HepG2 (cell line): ENCODE measurements at regions of chr17 and their contacts with region 1.

Region 1: DNA sequence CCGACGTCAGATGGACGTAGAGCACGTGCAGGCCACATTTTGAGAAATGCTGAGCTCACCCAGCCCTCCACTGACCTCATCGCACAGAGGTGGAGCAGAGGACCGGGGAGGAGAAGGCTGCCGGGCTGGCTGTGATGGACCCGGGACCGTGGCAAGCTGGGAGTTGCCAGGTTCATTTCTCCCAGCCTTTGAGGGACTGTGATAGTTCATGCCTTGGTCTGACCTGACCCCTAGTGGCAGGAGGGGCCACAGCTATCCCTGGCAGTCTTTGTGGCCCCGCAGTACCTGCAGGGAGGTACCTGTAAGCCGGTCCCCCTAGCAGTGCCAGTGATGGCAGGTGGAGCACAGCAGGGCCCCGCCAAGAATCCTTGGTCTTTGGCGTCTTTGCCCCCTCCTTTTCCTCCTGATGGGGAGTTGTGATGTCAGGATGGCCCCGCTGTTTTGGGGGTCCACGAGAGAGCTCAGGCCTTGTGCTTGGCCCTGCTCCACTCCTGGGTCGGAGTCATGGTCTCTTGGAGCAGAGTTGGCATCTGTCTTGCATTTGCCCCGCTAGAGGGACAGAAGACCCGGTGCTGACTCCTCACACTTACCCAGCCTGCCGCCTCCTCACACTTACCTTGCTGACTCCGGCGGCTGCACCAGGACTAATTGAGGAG is 50.4 kb downstream of the OR1D5 start:
- DNase-seq: peak; percentile 53
- ATAC-seq: peak; percentile 96
- H3K4me3 ChIP-seq: no peak overlapping the region
- H3K27ac ChIP-seq: no peak overlapping the region
- H3K4me1 ChIP-seq: no peaks in the 10 kb centered on the region
- H3K27me3 ChIP-seq: no peaks in the 10 kb centered on the region
- CTCF ChIP-seq: peak; percentile 90
- EP300 ChIP-seq: no peak
- POLR2A ChIP-seq: no peak
- RAD21 ChIP-seq: peak; percentile 92

Region 2: DNA sequence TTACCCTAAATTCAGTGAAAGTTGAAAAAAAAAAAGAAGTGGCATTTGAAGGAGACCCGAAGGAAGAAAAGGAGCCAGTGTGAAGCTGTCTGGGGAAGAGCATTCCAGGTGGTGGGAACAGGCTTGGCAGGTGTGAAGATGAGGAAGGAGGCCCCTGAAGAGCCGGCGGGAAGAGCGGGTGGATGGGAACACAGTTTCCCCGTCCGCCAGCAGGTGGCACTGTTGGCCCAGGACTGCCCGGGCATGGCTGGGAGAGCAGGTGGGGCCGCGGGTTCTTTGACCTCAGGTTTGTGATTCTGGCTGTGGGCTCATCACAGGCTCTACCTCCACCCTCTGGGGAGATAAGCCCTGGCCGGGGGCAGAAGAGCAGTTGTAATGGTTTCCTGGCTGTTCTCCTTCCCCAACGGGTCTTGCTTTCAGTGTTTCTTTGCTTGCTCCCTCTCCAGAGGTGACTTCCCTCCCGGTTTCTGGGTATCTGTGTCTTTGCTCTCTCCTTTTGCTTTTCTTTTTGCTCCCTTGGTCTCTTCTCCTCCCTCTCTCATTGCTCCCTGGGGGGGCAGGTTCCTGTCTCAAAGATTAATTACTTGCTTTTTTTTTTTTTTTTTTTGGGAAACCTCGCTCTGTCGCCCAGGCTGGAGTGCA is 184.5 kb before region 1 on chr17:
- CTCF ChIA-PET with region 1: interaction called, 14 read pairs
- POLR2A ChIA-PET with region 1: no interaction called
- in situ Hi-C with region 1: loop called (anchors 5 kb)
- intact Hi-C with region 1: loop called (anchors 1 kb)
- DNase-seq: peak; percentile 52
- ATAC-seq: peak; percentile 91
- H3K4me3 ChIP-seq: no peak overlapping the region
- H3K27ac ChIP-seq: no peak overlapping the region
- H3K4me1 ChIP-seq: peaks cover 18% of the 10 kb centered on the region
- H3K27me3 ChIP-seq: no peaks in the 10 kb centered on the region
- CTCF ChIP-seq: peak; percentile 94
- EP300 ChIP-seq: no peak
- POLR2A ChIP-seq: no peak
- RAD21 ChIP-seq: peak; percentile 91

Region 3: GRCh38 chr17:2847381-2848333 is 165.4 kb before region 1 on chr17:
- CTCF ChIA-PET with region 1: interaction called, 20 read pairs
- POLR2A ChIA-PET with region 1: no interaction called
- in situ Hi-C with region 1: loop called (anchors 10 kb)
- intact Hi-C with region 1: no loop called
- DNase-seq: no peak
- ATAC-seq: no peak
- H3K4me3 ChIP-seq: no peak overlapping the region
- H3K27ac ChIP-seq: no peak overlapping the region
- H3K4me1 ChIP-seq: 0 out of 2 replicates have a peak, but pooled peaks cover 7% of the 10 kb centered on the region
- H3K27me3 ChIP-seq: peaks cover 0 to 2% of the 10 kb centered on the region in 2 experiments; a peak in 1 of 5 replicates
- CTCF ChIP-seq: no peak
- EP300 ChIP-seq: no peak
- POLR2A ChIP-seq: no peak
- RAD21 ChIP-seq: no peak

Region 4: DNA sequence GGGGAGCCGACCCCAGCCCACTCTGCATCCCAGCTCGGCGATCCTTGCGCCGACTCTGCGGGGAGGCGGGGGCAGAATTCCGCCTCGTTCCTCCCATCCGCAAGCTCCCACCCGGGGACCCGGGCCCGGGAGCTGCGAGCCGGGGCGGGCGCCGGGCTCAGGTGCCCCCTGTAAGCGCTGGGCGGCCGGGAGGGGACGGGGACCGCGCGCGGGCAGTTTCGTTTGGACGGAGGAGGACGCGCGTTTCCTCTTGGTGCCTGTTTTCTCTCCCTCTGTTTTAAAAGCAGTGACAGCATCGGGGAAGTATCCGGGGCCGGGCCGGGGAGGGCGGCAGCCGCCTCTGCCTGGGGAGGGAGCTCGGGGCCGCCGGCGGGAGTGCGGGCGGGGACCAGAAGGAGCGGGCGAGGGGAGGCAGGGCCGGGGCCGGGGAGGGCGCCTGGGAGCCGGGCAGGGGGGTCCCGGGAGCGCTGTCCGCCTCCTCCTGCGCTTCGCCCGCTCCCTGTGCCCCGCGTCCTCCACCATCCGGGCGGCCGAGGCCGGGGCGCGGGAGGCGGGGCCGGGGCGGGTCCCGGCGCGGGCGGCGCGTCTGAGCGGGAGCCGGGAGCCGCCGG is 159.8 kb before region 1 on chr17:
- CTCF ChIA-PET with region 1: interaction called, 20 read pairs
- POLR2A ChIA-PET with region 1: no interaction called
- in situ Hi-C with region 1: loop called (anchors 10 kb)
- intact Hi-C with region 1: no loop called
- DNase-seq: no peak
- ATAC-seq: peak; percentile 18
- H3K4me3 ChIP-seq: peak overlapping the region; percentile 32 to 73 (median 61); a peak in 4 of 6 replicates
- H3K27ac ChIP-seq: no peak overlapping the region
- H3K4me1 ChIP-seq: peaks cover 28% of the 10 kb centered on the region
- H3K27me3 ChIP-seq: peaks cover 2 to 14% of the 10 kb centered on the region in 2 experiments; a peak in 4 of 5 replicates
- CTCF ChIP-seq: no peak
- EP300 ChIP-seq: no peak
- POLR2A ChIP-seq: no peak
- RAD21 ChIP-seq: no peak

Region 5: GRCh38 chr17:2929881-2930533 is 83.0 kb before region 1 on chr17:
- CTCF ChIA-PET with region 1: interaction called, 5 read pairs
- POLR2A ChIA-PET with region 1: no interaction called
- in situ Hi-C with region 1: loop called (anchors 5 kb)
- intact Hi-C with region 1: loop called (anchors 2 kb)
- DNase-seq: peak; percentile 29
- ATAC-seq: peak; percentile 93
- H3K4me3 ChIP-seq: no peak overlapping the region
- H3K27ac ChIP-seq: no peak overlapping the region
- H3K4me1 ChIP-seq: peaks cover 12% of the 10 kb centered on the region
- H3K27me3 ChIP-seq: no peaks in the 10 kb centered on the region
- CTCF ChIP-seq: peak; percentile 85
- EP300 ChIP-seq: no peak
- POLR2A ChIP-seq: no peak
- RAD21 ChIP-seq: peak; percentile 70

Region 6: GRCh38 chr17:2937331-2938003 is 75.6 kb before region 1 on chr17:
- CTCF ChIA-PET with region 1: no interaction called
- POLR2A ChIA-PET with region 1: no interaction called
- in situ Hi-C with region 1: loop called (anchors 5 kb)
- intact Hi-C with region 1: no loop called
- DNase-seq: no peak
- ATAC-seq: peak; percentile 35; the same call in 2 of the 3 replicates
- H3K4me3 ChIP-seq: no peak overlapping the region
- H3K27ac ChIP-seq: no peak overlapping the region
- H3K4me1 ChIP-seq: peaks cover 15% of the 10 kb centered on the region
- H3K27me3 ChIP-seq: no peaks in the 10 kb centered on the region
- CTCF ChIP-seq: peak; percentile 47
- EP300 ChIP-seq: no peak
- POLR2A ChIP-seq: no peak
- RAD21 ChIP-seq: no peak

Region 7: DNA sequence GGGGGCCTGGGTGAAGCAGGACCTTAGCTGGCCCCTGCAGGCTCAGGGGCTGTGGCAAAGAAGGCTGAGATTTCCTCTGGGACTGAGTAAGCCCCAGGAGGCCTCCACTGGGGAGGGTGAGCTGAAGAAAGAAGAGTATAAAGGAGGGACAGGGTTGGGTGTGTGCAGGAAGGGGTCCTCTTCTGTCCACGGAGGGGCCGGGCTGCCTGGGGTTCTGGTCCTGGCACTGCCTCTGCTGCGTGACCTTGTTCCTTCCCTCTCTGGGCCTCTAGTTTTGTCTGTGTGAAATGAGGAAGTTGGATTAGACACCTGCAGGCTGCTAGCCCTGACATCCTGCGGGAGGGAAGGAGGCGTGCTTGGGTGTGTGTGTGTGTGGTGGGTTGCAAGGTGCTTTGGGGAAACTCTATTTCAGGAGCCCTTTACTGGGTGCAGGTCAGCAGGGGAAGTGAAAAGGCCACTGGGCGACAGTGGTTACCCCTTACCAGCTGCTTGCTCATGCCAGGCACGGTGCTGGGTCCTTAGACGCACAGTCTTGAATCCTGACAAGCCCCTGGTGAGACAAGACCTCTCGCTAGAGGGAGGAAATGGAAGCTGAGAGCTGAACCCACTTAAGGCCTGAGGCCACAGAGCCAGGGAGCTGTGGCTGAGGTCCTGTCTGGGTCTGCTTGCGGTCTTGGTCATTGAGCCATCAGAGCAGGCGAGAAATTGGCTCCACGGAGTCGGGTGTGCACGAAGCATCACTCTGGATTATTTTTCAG is 10.3 kb before region 1 on chr17:
- CTCF ChIA-PET with region 1: no interaction called
- POLR2A ChIA-PET with region 1: no interaction called
- in situ Hi-C with region 1: no loop called
- intact Hi-C with region 1: no loop called
- DNase-seq: no peak
- ATAC-seq: no peak
- H3K4me3 ChIP-seq: no peak overlapping the region
- H3K27ac ChIP-seq: no peak overlapping the region
- H3K4me1 ChIP-seq: peaks cover 15% of the 10 kb centered on the region
- H3K27me3 ChIP-seq: no peaks in the 10 kb centered on the region
- CTCF ChIP-seq: no peak
- EP300 ChIP-seq: no peak
- POLR2A ChIP-seq: no peak
- RAD21 ChIP-seq: no peak

Region 8: DNA sequence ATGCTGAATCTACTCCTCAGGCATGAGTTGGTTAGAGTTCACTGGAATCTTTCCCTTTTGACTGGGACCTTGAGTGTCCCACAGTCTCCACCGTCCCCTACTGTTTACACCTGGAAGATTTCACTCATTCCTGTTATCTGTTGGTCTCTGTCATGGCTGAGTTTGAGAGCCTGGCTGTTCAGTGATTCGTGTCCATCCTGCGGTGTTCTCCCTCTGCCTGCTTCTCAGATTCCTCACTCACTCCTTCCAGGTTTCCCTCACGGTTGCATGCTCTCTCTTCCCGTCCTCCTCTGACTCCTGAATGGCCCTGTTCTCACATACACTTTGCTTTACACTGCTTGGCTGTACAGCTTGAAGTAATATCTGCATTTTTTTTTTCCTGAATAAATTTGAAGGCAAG is 25.9 kb after region 1 on chr17:
- CTCF ChIA-PET with region 1: no interaction called
- POLR2A ChIA-PET with region 1: no interaction called
- in situ Hi-C with region 1: no loop called
- intact Hi-C with region 1: no loop called
- DNase-seq: no peak
- ATAC-seq: no peak
- H3K4me3 ChIP-seq: no peak overlapping the region
- H3K27ac ChIP-seq: no peak overlapping the region
- H3K4me1 ChIP-seq: no peaks in the 10 kb centered on the region
- H3K27me3 ChIP-seq: no peaks in the 10 kb centered on the region; a peak in 1 of 5 replicates
- CTCF ChIP-seq: no peak
- EP300 ChIP-seq: no peak
- POLR2A ChIP-seq: no peak
- RAD21 ChIP-seq: no peak

Region 9: GRCh38 chr17:3189961-3190360 is 176.9 kb after region 1 on chr17:
- CTCF ChIA-PET with region 1: no interaction called
- POLR2A ChIA-PET with region 1: no interaction called
- in situ Hi-C with region 1: no loop called
- intact Hi-C with region 1: no loop called
- DNase-seq: no peak
- ATAC-seq: no peak
- H3K4me3 ChIP-seq: no peak overlapping the region
- H3K27ac ChIP-seq: no peak overlapping the region
- H3K4me1 ChIP-seq: no peaks in the 10 kb centered on the region
- H3K27me3 ChIP-seq: no peaks in the 10 kb centered on the region
- CTCF ChIP-seq: no peak
- EP300 ChIP-seq: no peak
- POLR2A ChIP-seq: no peak
- RAD21 ChIP-seq: no peak